HCT116 (cell line): ENCODE measurements at regions of chr20 and their contacts with region 1.

Region 1: DNA sequence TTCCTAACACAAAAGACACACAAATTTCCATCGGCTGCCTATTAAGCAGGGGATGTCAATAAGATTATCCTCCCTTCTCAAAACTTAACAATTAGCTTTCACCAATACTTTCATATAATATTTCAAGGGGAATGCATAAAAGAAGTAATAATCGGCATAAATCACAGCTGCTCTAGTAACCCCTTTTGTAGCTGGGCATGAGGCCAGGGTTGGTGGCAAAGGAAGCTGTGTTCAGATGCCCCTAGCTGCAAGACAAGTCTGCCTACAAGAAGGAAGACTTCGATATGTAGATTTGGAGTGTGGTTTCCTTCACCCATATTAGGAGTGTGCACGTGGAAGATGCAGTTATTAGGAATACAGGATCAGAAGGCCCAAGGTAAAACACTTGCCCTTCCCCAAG is 156.9 kb upstream of the SSTR4 start:
- DNase-seq: no peak
- ATAC-seq: no peak
- H3K4me3 ChIP-seq: no peak overlapping the region
- H3K27ac ChIP-seq: no peak overlapping the region
- H3K4me1 ChIP-seq: no peaks in the 10 kb centered on the region
- H3K27me3 ChIP-seq: peaks cover 31% of the 10 kb centered on the region
- CTCF ChIP-seq: no peak
- POLR2A ChIP-seq: no peak
- RAD21 ChIP-seq: no peak

Region 2: DNA sequence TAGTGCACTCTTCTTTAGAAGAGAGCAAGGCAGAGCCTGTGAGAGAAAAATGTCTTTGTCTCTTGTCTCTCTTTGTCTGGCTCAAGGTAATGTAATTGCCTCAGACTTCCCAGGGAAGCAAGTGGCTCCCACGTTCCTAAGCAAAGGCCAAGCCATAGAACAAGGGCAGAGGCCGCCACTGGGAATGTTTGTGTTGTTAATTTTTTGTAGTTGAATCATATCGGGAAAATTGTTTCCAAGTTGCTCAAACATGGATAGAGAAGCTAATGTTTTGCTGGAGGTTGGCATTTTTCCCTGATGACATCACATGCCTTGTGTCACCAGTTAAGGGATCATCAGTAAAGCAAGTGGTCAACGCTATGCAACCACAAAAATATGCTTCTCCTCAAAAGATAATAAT is 82.3 kb before region 1 on chr20:
- CTCF ChIA-PET with region 1: no interaction called
- POLR2A ChIA-PET with region 1: no interaction called
- RAD21 ChIA-PET with region 1: no interaction called
- intact Hi-C with region 1: loop called (anchors 10 kb)
- DNase-seq: peak; percentile 37
- ATAC-seq: peak; percentile 52
- H3K4me3 ChIP-seq: no peak overlapping the region
- H3K27ac ChIP-seq: no peak overlapping the region
- H3K4me1 ChIP-seq: peaks cover 0 to 42% of the 10 kb centered on the region in 2 experiments; a peak in 3 of 4 replicates
- H3K27me3 ChIP-seq: no peaks in the 10 kb centered on the region; the same call in 1 of the 2 replicates
- CTCF ChIP-seq: no peak
- POLR2A ChIP-seq: no peak
- RAD21 ChIP-seq: no peak